ENCODE measurements at regions of chr15 and their contacts with region 1.

Region 1: DNA sequence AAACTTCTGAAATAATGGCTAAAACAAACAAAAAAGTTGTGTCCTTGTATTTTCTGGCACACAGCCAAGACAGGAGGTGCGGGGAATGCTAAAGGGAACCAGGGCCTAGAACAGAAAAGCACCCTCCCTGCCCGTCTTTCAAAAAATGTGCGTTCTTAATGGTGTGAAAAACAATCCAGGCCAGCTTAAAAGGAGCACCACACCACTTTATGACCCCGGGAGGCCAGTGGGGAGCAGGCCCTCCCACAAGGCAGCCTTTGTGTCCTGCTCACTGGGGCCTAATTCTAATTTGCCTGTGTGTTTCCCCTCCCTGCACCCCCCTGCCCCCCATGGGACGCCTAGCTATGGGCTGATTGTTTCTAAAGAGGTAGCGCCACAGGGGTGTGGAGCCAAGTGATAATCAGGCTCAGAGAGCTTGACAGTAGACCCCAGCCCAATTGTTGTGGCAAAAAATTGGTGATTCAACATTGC is 181.4 kb downstream of the GREM1 start:
- DNase-seq: peak; percentile 3 to 14
- H3K4me3 ChIP-seq: no peak overlapping the region
- H3K27ac ChIP-seq: no peak overlapping the region
- H3K4me1 ChIP-seq: no peaks in the 10 kb centered on the region
- H3K27me3 ChIP-seq: no peaks in the 10 kb centered on the region
- CTCF ChIP-seq: no peak
- POLR2A ChIP-seq: no peak

Region 2: GRCh38 chr15:32717426-32718226 is 181.5 kb before region 1 on chr15 and contains the start of gene GREM1:
- intact Hi-C with region 1: no loop called
- DNase-seq: no peak
- H3K4me3 ChIP-seq: peak within 1 kb of the TSS in 2 of 3 donors; percentile 0 to 33
- H3K27ac ChIP-seq: no peak within 1 kb of the TSS
- H3K4me1 ChIP-seq: peaks cover 15 to 25% of the 10 kb centered on the region in 2 donors
- H3K27me3 ChIP-seq: peaks cover 16% of the 10 kb centered on the region
- CTCF ChIP-seq: no peak
- POLR2A ChIP-seq: no peak
- total RNA-seq, gene GREM1: 0.44 to 7.8 (median 3.2) TPM in 3 of 4 donors, not detected in the other

Region 3: GRCh38 chr15:32956006-32956405 is 56.8 kb after region 1 on chr15:
- intact Hi-C with region 1: loop called (anchors 10 kb)
- DNase-seq: no peak
- H3K4me3 ChIP-seq: no peak overlapping the region
- H3K27ac ChIP-seq: no peak overlapping the region
- H3K4me1 ChIP-seq: peaks cover 9 to 10% of the 10 kb centered on the region in 2 donors
- H3K27me3 ChIP-seq: no peaks in the 10 kb centered on the region
- CTCF ChIP-seq: peak in 3 of 6 experiments; percentile 16 to 23 (median 22)
- POLR2A ChIP-seq: no peak

Region 4: GRCh38 chr15:33007303-33007855 is 108.2 kb after region 1 on chr15:
- intact Hi-C with region 1: no loop called
- DNase-seq: no peak
- H3K4me3 ChIP-seq: no peak overlapping the region
- H3K27ac ChIP-seq: no peak overlapping the region
- H3K4me1 ChIP-seq: peaks cover 12 to 14% of the 10 kb centered on the region in 2 donors
- H3K27me3 ChIP-seq: no peaks in the 10 kb centered on the region
- CTCF ChIP-seq: peak in 3 of 6 experiments; percentile 14 to 27 (median 27)
- POLR2A ChIP-seq: no peak

Region 5: GRCh38 chr15:33194704-33195670 is 295.8 kb after region 1 on chr15 and contains the start of gene FMN1:
- intact Hi-C with region 1: no loop called
- DNase-seq: peak; percentile 95 to 96
- H3K4me3 ChIP-seq: peak within 1 kb of the TSS in 2 of 3 donors; percentile 40 to 49
- H3K27ac ChIP-seq: peak within 1 kb of the TSS in 2 of 3 donors; percentile 33 to 41
- H3K4me1 ChIP-seq: peaks cover 0 to 8% of the 10 kb centered on the region in 2 donors
- H3K27me3 ChIP-seq: no peaks in the 10 kb centered on the region
- CTCF ChIP-seq: no peak
- POLR2A ChIP-seq: peak in 1 of 2 donors; percentile 54
- total RNA-seq, gene FMN1: 13.8 to 28.3 (median 22.5) TPM

Measured in thyroid gland (tissue), 4 donors.